ENCODE measurements at regions of chr3 and their contacts with region 1.

Region 1: DNA sequence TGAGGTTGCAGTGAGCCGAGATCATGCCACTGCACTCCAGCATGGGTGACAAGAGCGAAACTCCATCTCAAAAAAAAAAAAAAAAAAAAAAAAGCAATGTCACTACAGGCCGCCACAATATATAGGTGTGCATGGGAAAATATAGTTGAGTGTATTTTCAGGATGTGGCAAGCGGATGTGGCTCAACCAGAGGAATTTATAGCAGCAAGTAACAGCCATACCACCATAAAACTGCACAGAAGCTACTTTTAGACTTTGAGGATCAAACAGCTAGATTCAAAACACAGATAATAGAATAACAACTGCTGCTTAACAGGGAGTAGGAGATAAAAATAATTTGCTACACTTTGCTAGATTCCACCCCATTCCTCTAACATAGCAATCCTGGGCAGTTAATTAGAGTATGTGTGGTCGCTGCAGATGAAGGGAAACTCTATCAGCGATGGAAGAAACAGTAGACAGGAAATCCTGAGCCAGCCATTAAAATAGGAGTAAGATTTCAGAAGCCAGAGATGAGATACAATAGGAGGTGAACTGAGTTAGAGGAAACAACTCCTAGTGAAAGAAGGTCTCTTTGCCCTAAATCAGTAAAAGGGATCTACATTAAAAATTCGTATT is 318.7 kb upstream of the STT3B start:
- DNase-seq: peak in 29 of 35 experiments; percentile 10 to 69 (median 31)
- ATAC-seq: peak; percentile 70 to 93 (median 81)
- H3K4me3 ChIP-seq: no peak overlapping the region
- H3K4me3 Mint-ChIP-seq: peak overlapping the region; percentile 21 to 46 (median 21)
- H3K27ac ChIP-seq: peak overlapping the region; percentile 15
- H3K27ac Mint-ChIP-seq: peak overlapping the region; percentile 77 to 80
- H3K4me1 ChIP-seq: peaks cover 29 to 43% of the 10 kb centered on the region in 2 experiments
- H3K4me1 Mint-ChIP-seq: peaks cover 92 to 97% (median 95%) of the 10 kb centered on the region in 3 donors
- H3K27me3 ChIP-seq: no peaks in the 10 kb centered on the region
- H3K27me3 Mint-ChIP-seq: no peaks in the 10 kb centered on the region

Region 2: GRCh38 chr3:31196881-31197364 is 17.1 kb before region 1 on chr3:
- CTCF ChIA-PET with region 1: interaction called in 1 of 2 experiments, 10 read pairs
- POLR2A ChIA-PET with region 1: no interaction called
- DNase-seq: no peak
- ATAC-seq: no peak
- H3K4me3 ChIP-seq: no peak overlapping the region
- H3K4me3 Mint-ChIP-seq: no peak overlapping the region
- H3K27ac ChIP-seq: no peak overlapping the region
- H3K27ac Mint-ChIP-seq: no peak overlapping the region
- H3K4me1 ChIP-seq: no peaks in the 10 kb centered on the region
- H3K4me1 Mint-ChIP-seq: peaks cover 0 to 6% (median 4%) of the 10 kb centered on the region in 3 donors
- H3K27me3 ChIP-seq: no peaks in the 10 kb centered on the region
- H3K27me3 Mint-ChIP-seq: peaks cover 0 to 3% of the 10 kb centered on the region in 2 donors

Region 3: DNA sequence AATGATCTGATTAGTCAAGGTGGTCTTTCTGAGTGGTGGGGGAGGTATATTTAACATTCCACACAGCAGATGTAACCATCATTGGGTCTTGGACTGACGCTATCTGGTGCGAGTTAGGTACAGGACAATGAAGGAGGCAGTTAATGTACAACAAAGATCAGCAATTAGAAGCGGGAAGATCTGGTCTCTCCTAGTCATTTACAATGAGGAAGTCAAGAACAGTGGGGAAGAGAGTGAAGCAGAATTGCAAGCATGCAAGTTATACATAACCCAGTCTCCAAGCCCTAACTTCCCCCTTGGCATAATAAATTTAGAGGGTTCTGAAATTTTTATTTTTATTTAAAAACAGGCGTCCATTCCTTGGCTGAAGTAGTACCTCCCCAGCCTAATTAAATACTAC is 906.5 kb after region 1 on chr3:
- CTCF ChIA-PET with region 1: interaction called in 1 of 2 experiments, 19 read pairs
- POLR2A ChIA-PET with region 1: no interaction called
- DNase-seq: no peak
- ATAC-seq: no peak
- H3K4me3 ChIP-seq: no peak overlapping the region
- H3K4me3 Mint-ChIP-seq: no peak overlapping the region
- H3K27ac ChIP-seq: no peak overlapping the region
- H3K27ac Mint-ChIP-seq: no peak overlapping the region
- H3K4me1 ChIP-seq: peaks cover 6 to 13% of the 10 kb centered on the region in 2 experiments
- H3K4me1 Mint-ChIP-seq: peaks cover 50 to 66% (median 51%) of the 10 kb centered on the region in 3 donors
- H3K27me3 ChIP-seq: no peaks in the 10 kb centered on the region
- H3K27me3 Mint-ChIP-seq: no peaks in the 10 kb centered on the region